CD8-positive, alpha-beta T cell (primary cell): ENCODE measurements at regions of chr2 and their contacts with region 1.

Region 1: DNA sequence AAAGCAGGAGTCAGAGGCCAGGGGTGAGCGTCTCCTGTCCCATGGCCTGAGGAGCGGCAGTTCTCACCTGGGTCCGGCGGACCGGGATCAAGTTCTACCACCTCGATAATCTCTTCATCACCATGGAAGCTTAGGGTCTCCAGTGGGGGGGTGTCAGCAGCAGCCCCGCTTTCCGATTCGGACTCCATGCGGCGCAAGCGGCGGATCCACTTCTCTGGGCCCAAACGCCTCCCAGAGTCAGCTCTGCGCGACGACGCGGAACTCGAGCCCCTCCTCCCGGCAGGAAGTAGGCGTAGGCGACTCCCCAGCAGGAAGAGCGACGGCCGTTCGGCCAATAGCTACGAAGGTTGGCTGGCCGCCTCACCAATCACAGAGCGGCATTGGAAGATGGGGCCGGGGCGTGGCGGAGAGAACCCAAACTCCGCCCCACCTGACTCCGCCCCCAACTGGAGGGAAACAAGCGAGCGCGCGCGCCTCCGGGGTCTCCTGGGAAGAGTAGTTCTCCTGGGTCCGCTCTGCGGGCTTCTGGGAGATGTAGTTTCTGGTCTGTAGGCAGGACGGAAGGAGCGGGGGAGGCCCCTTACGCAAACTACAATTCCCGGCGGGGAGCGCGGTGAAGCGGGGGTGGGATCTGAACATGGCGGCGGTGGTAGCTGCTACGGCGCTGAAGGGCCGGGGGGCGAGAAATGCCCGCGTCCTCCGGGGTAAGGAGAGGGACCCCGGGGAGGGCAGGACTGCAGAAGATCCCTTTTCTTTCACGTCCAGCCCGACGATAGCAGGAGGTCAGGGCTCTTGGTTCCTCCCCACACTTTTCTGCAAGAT is at the starts of genes AAMP and PNKD:
- DNase-seq: peak; percentile 100
- ATAC-seq: peak; percentile 89
- H3K4me3 ChIP-seq: peak within 1 kb of the TSS; percentile 82 to 95
- H3K4me3 Mint-ChIP-seq: peak within 1 kb of the TSS; percentile 92
- H3K27ac ChIP-seq: peak within 1 kb of the TSS; percentile 81 to 82
- H3K27ac Mint-ChIP-seq: peak within 1 kb of the TSS; percentile 92
- H3K4me1 ChIP-seq: peaks cover 31% of the 10 kb centered on the region
- H3K4me1 Mint-ChIP-seq: peaks cover 50% of the 10 kb centered on the region
- H3K27me3 ChIP-seq: no peaks in the 10 kb centered on the region
- H3K27me3 Mint-ChIP-seq: no peaks in the 10 kb centered on the region
- CTCF ChIP-seq: no peak
- total RNA-seq, gene AAMP: 44.7 to 50.4 TPM
- total RNA-seq, gene PNKD: 7.1 to 7.2 TPM

Region 2: GRCh38 chr2:216412022-216412999 is 1857.8 kb before region 1 on chr2 and contains the start of gene SMARCAL1:
- CTCF ChIA-PET with region 1: no interaction called
- POLR2A ChIA-PET with region 1: no interaction called
- intact Hi-C with region 1: loop called in 1 of 2 experiments (anchors 5 kb)
- DNase-seq: peak; percentile 95 to 99 (median 98)
- ATAC-seq: peak; percentile 93
- H3K4me3 ChIP-seq: peak within 1 kb of the TSS; percentile 89 to 92
- H3K4me3 Mint-ChIP-seq: peak within 1 kb of the TSS; percentile 95
- H3K27ac ChIP-seq: peak within 1 kb of the TSS; percentile 68 to 90
- H3K27ac Mint-ChIP-seq: peak within 1 kb of the TSS; percentile 95
- H3K4me1 ChIP-seq: no peaks in the 10 kb centered on the region
- H3K4me1 Mint-ChIP-seq: peaks cover 26% of the 10 kb centered on the region
- H3K27me3 ChIP-seq: no peaks in the 10 kb centered on the region
- H3K27me3 Mint-ChIP-seq: no peaks in the 10 kb centered on the region
- CTCF ChIP-seq: no peak
- total RNA-seq, gene SMARCAL1: 4.6 to 5.3 TPM

Region 3: DNA sequence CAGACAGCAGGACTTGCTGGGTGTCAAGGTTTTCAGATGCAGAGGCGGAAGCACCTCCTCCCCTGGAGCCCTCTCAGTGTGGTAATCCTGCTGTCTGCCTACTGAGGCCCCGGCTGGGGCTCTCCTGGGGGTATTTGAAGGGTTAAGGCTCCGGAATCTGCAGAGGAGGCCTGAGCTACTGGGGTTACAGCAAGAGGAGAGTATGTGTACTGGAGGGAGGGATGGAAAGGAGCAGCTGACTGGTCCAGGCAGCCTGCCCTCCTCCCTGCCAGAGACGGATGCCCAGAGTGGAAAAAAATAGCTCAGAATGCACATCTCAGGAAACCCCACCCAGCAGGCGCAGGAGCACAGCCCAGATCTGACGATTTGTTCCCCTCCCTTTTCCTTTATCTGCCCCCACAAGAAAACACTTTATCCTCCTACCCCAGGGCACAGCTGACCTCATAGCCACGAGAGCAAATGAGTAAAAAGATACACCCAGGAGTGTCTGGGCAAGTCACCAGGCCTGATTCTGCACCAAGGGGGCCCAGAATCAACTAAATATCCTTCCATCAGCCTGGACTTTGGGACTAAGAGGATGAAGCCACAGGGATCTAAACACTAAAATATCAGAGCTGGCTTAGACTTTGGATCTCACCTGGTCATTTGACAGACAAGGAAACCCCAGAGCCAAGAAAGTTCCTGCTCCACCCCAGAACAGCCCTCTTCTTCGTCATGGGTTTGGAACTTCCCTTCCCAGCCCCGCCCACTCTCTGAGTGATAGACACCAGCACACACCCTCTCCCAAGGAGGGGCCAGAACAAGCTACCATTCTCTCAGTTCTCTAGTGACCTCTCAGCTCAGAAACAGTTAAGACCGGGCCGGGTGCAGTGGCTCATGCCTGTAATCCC is 16.7 kb after region 1 on chr2:
- CTCF ChIA-PET with region 1: interaction called, 340 read pairs
- POLR2A ChIA-PET with region 1: interaction called, 58 read pairs
- intact Hi-C with region 1: loop called (anchors 1 kb)
- DNase-seq: peak; percentile 56 to 97 (median 80)
- ATAC-seq: peak; percentile 62
- H3K4me3 ChIP-seq: peak overlapping the region; percentile 51 to 60
- H3K4me3 Mint-ChIP-seq: peak overlapping the region; percentile 90
- H3K27ac ChIP-seq: peak overlapping the region; percentile 87 to 99
- H3K27ac Mint-ChIP-seq: peak overlapping the region; percentile 100
- H3K4me1 ChIP-seq: peaks cover 93% of the 10 kb centered on the region
- H3K4me1 Mint-ChIP-seq: peaks cover 78% of the 10 kb centered on the region
- H3K27me3 ChIP-seq: no peaks in the 10 kb centered on the region
- H3K27me3 Mint-ChIP-seq: no peaks in the 10 kb centered on the region
- CTCF ChIP-seq: no peak

Region 4: DNA sequence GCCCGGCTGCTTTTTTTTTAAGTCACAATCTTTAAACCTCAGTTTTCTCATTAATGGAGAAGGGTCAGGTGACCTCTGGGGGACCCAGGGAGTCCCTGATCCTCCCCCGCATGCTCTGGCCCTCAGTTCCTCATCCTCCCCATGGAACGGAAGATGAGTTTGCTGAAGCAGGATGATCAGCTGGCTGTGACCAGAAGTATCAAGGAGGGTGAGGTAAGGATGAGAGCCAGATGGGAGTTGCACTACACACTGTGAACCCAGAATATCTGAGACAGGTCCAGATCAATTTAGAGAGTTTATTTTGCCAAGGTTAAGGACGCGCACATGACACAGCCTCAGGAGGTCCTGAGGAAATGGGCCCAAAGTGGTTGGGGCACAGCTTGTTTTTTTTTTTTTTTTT is 90.3 kb after region 1 on chr2:
- CTCF ChIA-PET with region 1: interaction called, 114 read pairs
- POLR2A ChIA-PET with region 1: interaction called, 6 read pairs
- intact Hi-C with region 1: loop called (anchors 1 kb)
- DNase-seq: peak in 1 of 9 experiments; percentile 17
- ATAC-seq: no peak
- H3K4me3 ChIP-seq: no peak overlapping the region
- H3K4me3 Mint-ChIP-seq: no peak overlapping the region
- H3K27ac ChIP-seq: no peak overlapping the region
- H3K27ac Mint-ChIP-seq: no peak overlapping the region
- H3K4me1 ChIP-seq: no peaks in the 10 kb centered on the region
- H3K4me1 Mint-ChIP-seq: peaks cover 3% of the 10 kb centered on the region
- H3K27me3 ChIP-seq: no peaks in the 10 kb centered on the region
- H3K27me3 Mint-ChIP-seq: no peaks in the 10 kb centered on the region
- CTCF ChIP-seq: no peak

Region 5: GRCh38 chr2:218568190-218569037 is 298.3 kb after region 1 on chr2 and contains the starts of genes CNOT9 and USP37:
- CTCF ChIA-PET with region 1: no interaction called
- POLR2A ChIA-PET with region 1: no interaction called
- intact Hi-C with region 1: loop called (anchors 1 kb)
- DNase-seq: peak; percentile 99 to 100 (median 100)
- ATAC-seq: peak; percentile 90
- H3K4me3 ChIP-seq: peak within 1 kb of the TSS; percentile 84 to 92
- H3K4me3 Mint-ChIP-seq: peak within 1 kb of the TSS; percentile 96
- H3K27ac ChIP-seq: peak within 1 kb of the TSS; percentile 91 to 99
- H3K27ac Mint-ChIP-seq: peak within 1 kb of the TSS; percentile 98
- H3K4me1 ChIP-seq: peaks cover 45% of the 10 kb centered on the region
- H3K4me1 Mint-ChIP-seq: peaks cover 63% of the 10 kb centered on the region
- H3K27me3 ChIP-seq: no peaks in the 10 kb centered on the region
- H3K27me3 Mint-ChIP-seq: no peaks in the 10 kb centered on the region
- CTCF ChIP-seq: no peak
- total RNA-seq, gene CNOT9: 73.9 to 79.3 TPM
- total RNA-seq, gene USP37: 22.8 to 23.2 TPM

Region 6: DNA sequence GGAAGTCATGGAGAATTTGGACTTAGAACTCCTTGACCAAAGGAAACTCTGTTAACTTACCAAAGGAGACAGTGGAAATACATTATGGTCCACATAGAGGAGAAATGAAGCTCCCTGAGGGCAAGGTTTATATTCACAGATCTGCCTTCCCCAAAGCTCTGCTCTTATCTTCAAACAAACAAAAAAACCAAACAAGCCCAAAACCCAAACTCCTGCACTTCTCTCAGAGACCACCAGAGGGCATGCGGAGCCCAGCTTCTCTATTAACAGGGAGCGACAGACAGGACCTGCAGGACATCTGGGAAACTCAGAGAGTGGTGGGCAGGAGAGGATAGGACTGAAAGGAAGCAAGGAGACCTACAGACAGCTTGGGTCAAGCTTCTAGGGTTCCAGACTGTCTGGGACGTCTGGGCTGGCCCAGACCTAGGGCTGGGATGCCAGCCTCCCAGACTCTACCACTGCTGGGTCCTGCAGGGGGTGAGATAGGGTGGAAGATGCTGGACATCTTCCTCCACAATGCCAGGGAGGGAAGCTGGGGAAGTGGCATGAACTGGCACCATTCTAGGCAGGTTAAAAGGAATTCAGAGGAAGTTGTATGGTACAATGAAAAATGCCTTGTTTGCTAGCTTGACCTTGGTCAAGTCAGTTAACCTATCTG is 606.6 kb after region 1 on chr2:
- CTCF ChIA-PET with region 1: no interaction called
- POLR2A ChIA-PET with region 1: no interaction called
- intact Hi-C with region 1: loop called in 1 of 2 experiments (anchors 10 kb)
- DNase-seq: peak; percentile 61 to 86 (median 78)
- ATAC-seq: no peak
- H3K4me3 ChIP-seq: no peak overlapping the region
- H3K4me3 Mint-ChIP-seq: no peak overlapping the region
- H3K27ac ChIP-seq: no peak overlapping the region
- H3K27ac Mint-ChIP-seq: no peak overlapping the region
- H3K4me1 ChIP-seq: peaks cover 59% of the 10 kb centered on the region
- H3K4me1 Mint-ChIP-seq: peaks cover 41% of the 10 kb centered on the region
- H3K27me3 ChIP-seq: peaks cover 16 to 30% of the 10 kb centered on the region in 2 experiments
- H3K27me3 Mint-ChIP-seq: peaks cover 34% of the 10 kb centered on the region
- CTCF ChIP-seq: peak; percentile 99